CD8-positive, alpha-beta T cell (primary cell): ENCODE measurements at regions of chr12 and their contacts with region 1.

Region 1: DNA sequence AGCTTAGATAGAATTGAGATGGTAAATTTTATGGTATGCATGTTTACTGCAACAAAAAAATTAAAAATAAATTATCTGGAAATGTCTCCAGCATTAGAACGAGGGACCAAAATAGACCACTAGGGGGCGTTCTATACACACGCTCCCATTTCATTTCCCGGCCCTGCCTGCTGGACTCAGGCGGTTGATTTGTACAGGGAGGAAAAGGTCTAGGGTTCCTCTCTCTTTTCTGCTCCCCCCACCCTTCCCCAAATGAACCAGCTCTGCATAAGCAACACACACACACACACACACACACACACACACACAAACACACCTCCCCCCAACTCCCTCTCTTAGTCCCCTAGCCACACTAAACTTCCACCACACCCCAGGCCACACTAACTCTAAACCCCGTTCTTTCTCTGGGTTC is 7.8 kb upstream of the DTX1 start:
- DNase-seq: peak; percentile 28 to 80 (median 62)
- ATAC-seq: peak; percentile 80
- H3K4me3 ChIP-seq: no peak overlapping the region
- H3K4me3 Mint-ChIP-seq: no peak overlapping the region
- H3K27ac ChIP-seq: no peak overlapping the region
- H3K27ac Mint-ChIP-seq: no peak overlapping the region
- H3K4me1 ChIP-seq: peaks cover 5% of the 10 kb centered on the region
- H3K4me1 Mint-ChIP-seq: peaks cover 19% of the 10 kb centered on the region
- H3K27me3 ChIP-seq: no peaks in the 10 kb centered on the region
- H3K27me3 Mint-ChIP-seq: peaks cover 4% of the 10 kb centered on the region
- CTCF ChIP-seq: peak; percentile 71

Region 2: DNA sequence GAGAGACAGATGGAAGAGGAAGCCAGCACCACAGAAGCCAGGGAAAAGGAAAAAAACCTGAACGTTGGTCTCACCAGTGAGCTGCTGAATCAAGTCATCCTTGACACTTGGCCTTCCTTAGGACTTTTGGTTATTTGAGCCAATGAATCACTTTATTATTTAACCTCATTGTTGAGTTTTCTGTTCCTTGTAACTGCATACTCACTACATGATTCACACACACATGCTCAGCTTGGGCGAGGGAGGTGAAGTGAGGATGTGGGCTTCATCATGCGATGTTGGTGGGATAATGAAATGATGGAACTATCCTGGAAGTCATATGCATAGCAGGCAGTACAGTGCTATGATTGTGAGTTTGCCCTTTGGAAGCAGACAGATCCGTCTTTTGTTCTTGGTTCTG is 297.8 kb before region 1 on chr12:
- CTCF ChIA-PET with region 1: no interaction called
- POLR2A ChIA-PET with region 1: no interaction called
- intact Hi-C with region 1: no loop called
- DNase-seq: no peak
- ATAC-seq: no peak
- H3K4me3 ChIP-seq: no peak overlapping the region
- H3K4me3 Mint-ChIP-seq: no peak overlapping the region
- H3K27ac ChIP-seq: no peak overlapping the region
- H3K27ac Mint-ChIP-seq: no peak overlapping the region
- H3K4me1 ChIP-seq: no peaks in the 10 kb centered on the region
- H3K4me1 Mint-ChIP-seq: peaks cover 26% of the 10 kb centered on the region
- H3K27me3 ChIP-seq: no peaks in the 10 kb centered on the region
- H3K27me3 Mint-ChIP-seq: peaks cover 29% of the 10 kb centered on the region
- CTCF ChIP-seq: no peak

Region 3: GRCh38 chr12:113065126-113066007 is 16.6 kb after region 1 on chr12:
- CTCF ChIA-PET with region 1: interaction called, 25 read pairs
- POLR2A ChIA-PET with region 1: no interaction called
- intact Hi-C with region 1: no loop called
- DNase-seq: no peak
- ATAC-seq: no peak
- H3K4me3 ChIP-seq: no peak overlapping the region
- H3K4me3 Mint-ChIP-seq: no peak overlapping the region
- H3K27ac ChIP-seq: no peak overlapping the region
- H3K27ac Mint-ChIP-seq: no peak overlapping the region
- H3K4me1 ChIP-seq: peaks cover 13% of the 10 kb centered on the region
- H3K4me1 Mint-ChIP-seq: peaks cover 39% of the 10 kb centered on the region
- H3K27me3 ChIP-seq: no peaks in the 10 kb centered on the region
- H3K27me3 Mint-ChIP-seq: no peaks in the 10 kb centered on the region
- CTCF ChIP-seq: no peak

Region 4: GRCh38 chr12:113082486-113083148 is 33.9 kb after region 1 on chr12:
- CTCF ChIA-PET with region 1: interaction called, 10 read pairs
- POLR2A ChIA-PET with region 1: no interaction called
- intact Hi-C with region 1: no loop called
- DNase-seq: no peak
- ATAC-seq: no peak
- H3K4me3 ChIP-seq: no peak overlapping the region
- H3K4me3 Mint-ChIP-seq: no peak overlapping the region
- H3K27ac ChIP-seq: no peak overlapping the region
- H3K27ac Mint-ChIP-seq: no peak overlapping the region
- H3K4me1 ChIP-seq: peaks cover 26% of the 10 kb centered on the region
- H3K4me1 Mint-ChIP-seq: peaks cover 47% of the 10 kb centered on the region
- H3K27me3 ChIP-seq: no peaks in the 10 kb centered on the region
- H3K27me3 Mint-ChIP-seq: no peaks in the 10 kb centered on the region
- CTCF ChIP-seq: no peak

Region 5: GRCh38 chr12:113098446-113098896 is 49.7 kb after region 1 on chr12:
- CTCF ChIA-PET with region 1: interaction called, 113 read pairs
- POLR2A ChIA-PET with region 1: no interaction called
- intact Hi-C with region 1: loop called (anchors 1 kb)
- DNase-seq: peak; percentile 35 to 78 (median 66)
- ATAC-seq: peak; percentile 93
- H3K4me3 ChIP-seq: no peak overlapping the region
- H3K4me3 Mint-ChIP-seq: no peak overlapping the region
- H3K27ac ChIP-seq: no peak overlapping the region
- H3K27ac Mint-ChIP-seq: peak overlapping the region; percentile 18
- H3K4me1 ChIP-seq: peaks cover 9% of the 10 kb centered on the region
- H3K4me1 Mint-ChIP-seq: peaks cover 13% of the 10 kb centered on the region
- H3K27me3 ChIP-seq: no peaks in the 10 kb centered on the region
- H3K27me3 Mint-ChIP-seq: no peaks in the 10 kb centered on the region
- CTCF ChIP-seq: peak; percentile 93

Region 6: DNA sequence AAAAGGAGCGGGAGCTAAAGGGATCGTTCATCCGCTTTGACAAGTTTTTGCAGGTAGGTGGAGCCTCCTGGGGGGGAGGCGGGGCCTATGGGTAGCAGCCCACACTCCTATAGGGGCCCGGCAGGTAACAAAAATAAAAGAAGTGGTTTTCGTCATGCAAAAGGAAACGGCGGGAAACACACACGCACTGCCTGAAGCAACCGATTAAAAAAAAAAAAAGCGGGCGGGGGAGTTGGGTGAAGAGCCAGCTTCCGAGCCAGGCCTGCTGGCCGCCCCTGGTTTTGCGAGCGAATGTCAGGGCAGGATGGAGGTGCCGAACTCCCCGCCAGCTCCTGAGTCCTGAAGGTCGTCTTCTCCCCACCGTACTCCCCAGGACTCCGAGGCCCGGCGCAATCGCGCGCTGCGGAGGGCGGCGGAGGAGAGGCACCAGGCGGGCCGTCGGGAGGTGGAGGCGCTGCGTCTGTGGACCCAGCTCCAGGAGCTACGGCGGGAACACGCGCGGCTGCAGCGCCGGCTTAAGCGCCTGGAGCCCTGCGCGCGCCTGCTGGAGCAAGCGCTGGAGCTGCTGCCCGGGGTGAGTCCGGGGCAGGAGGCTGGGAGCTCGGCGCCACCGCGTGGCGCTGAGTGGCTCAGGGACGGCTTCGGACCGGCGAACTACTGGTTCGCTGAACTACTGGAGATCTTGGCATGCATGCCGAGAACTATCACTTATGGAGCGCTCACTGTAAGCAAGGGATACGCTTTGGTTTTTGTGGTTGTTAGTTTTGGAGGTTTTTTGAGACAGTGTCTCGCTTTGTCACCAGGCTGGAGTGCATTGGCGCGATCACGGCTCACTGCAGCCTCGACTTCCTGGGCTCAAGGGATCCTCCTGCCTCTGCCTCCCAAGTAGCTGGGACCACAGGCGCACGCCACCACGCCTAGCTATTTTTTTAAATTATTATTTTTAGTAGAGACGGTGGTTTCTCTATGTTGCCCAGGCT is 104.4 kb after region 1 on chr12:
- CTCF ChIA-PET with region 1: interaction called, 18 read pairs
- POLR2A ChIA-PET with region 1: no interaction called
- intact Hi-C with region 1: loop called in 1 of 2 experiments (anchors 1 kb)
- DNase-seq: peak; percentile 24 to 83 (median 61)
- ATAC-seq: peak; percentile 94
- H3K4me3 ChIP-seq: peak overlapping the region; percentile 45 to 55
- H3K4me3 Mint-ChIP-seq: peak overlapping the region; percentile 79
- H3K27ac ChIP-seq: no peak overlapping the region
- H3K27ac Mint-ChIP-seq: no peak overlapping the region
- H3K4me1 ChIP-seq: peaks cover 22% of the 10 kb centered on the region
- H3K4me1 Mint-ChIP-seq: peaks cover 23% of the 10 kb centered on the region
- H3K27me3 ChIP-seq: peaks cover 0 to 17% of the 10 kb centered on the region in 2 experiments
- H3K27me3 Mint-ChIP-seq: peaks cover 4% of the 10 kb centered on the region
- CTCF ChIP-seq: no peak

Region 7: DNA sequence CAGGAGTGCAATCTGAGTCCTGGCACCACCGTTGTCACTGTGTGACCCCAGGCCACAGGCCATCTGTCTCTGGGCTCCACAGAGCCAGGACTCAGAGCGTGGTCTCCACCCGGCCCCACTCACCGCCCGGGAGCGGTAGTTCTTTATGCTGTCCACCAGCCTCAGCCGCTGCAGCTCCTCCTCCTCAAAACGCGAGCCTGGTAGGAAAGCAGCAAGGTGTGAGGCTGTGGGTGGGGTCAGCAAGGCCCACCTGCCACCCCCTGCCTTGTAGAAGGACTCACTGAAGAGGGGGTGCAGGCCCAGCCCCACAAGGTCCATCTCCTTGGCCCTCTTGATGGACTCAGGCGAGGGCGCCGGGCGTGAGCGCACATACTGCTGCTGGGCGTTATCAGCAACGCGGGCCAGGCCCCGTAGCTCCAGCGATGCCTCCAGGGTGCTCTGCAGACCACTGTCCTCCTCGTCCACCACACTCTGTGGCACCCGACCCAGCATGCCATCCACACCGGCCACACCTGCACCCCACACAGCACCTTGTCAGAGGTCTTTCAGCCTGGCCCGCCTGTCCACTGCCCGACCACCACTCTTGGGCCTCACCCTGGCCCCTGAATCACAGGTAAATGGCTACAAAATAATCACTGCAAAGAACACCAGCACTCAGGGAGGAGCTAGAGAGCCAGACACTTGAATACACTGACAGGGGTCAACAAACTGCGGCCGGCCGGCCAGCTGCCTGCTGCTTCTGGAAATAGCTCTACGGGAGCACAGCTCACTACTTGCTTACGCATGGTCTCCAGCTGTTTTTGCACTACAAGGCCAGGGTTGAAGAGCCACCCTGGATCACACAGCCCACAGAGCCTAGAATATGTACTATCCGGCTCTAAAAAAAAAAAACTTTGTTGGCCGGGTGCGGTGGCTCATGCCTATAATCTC is 117.1 kb after region 1 on chr12:
- CTCF ChIA-PET with region 1: interaction called, 91 read pairs
- POLR2A ChIA-PET with region 1: no interaction called
- intact Hi-C with region 1: no loop called
- DNase-seq: no peak
- ATAC-seq: no peak
- H3K4me3 ChIP-seq: no peak overlapping the region
- H3K4me3 Mint-ChIP-seq: no peak overlapping the region
- H3K27ac ChIP-seq: no peak overlapping the region
- H3K27ac Mint-ChIP-seq: no peak overlapping the region
- H3K4me1 ChIP-seq: no peaks in the 10 kb centered on the region
- H3K4me1 Mint-ChIP-seq: no peaks in the 10 kb centered on the region
- H3K27me3 ChIP-seq: no peaks in the 10 kb centered on the region
- H3K27me3 Mint-ChIP-seq: no peaks in the 10 kb centered on the region
- CTCF ChIP-seq: no peak

Region 8: GRCh38 chr12:113232840-113233585 is 184.3 kb after region 1 on chr12:
- CTCF ChIA-PET with region 1: no interaction called
- POLR2A ChIA-PET with region 1: no interaction called
- intact Hi-C with region 1: loop called in 1 of 2 experiments (anchors 1 kb)
- DNase-seq: peak; percentile 46 to 89 (median 74)
- ATAC-seq: peak; percentile 97
- H3K4me3 ChIP-seq: peak overlapping the region; percentile 31 to 34
- H3K4me3 Mint-ChIP-seq: peak overlapping the region; percentile 86
- H3K27ac ChIP-seq: peak overlapping the region; percentile 16 to 46
- H3K27ac Mint-ChIP-seq: peak overlapping the region; percentile 90
- H3K4me1 ChIP-seq: peaks cover 41% of the 10 kb centered on the region
- H3K4me1 Mint-ChIP-seq: peaks cover 42% of the 10 kb centered on the region
- H3K27me3 ChIP-seq: no peaks in the 10 kb centered on the region
- H3K27me3 Mint-ChIP-seq: no peaks in the 10 kb centered on the region
- CTCF ChIP-seq: peak; percentile 55